ENCODE measurements at regions of chr10 and their contacts with region 1.

Region 1: DNA sequence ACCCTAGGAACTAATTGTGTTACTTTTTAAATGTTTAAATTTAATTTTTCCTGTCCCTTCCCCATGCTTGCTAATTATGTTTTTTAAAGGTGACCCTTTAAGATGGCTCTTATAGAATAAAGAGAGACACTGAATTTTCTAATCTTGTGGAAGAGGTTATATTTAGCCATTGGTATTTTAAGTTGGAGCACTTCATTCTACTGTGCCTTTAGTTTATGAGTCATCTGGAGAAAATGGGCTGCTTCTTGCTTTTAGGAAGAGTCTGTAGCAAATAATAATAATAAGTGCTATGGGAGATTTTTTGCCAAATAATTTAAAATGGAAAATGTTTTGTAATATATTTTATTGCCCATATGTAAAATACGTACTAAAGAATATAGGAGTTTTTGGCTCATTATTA is 139.7 kb downstream of the ADK start:
- DNase-seq: no peak
- ATAC-seq: no peak
- H3K4me3 Mint-ChIP-seq: no peak overlapping the region
- H3K27ac Mint-ChIP-seq: no peak overlapping the region
- H3K4me1 Mint-ChIP-seq: peaks cover 17% of the 10 kb centered on the region
- H3K27me3 Mint-ChIP-seq: no peaks in the 10 kb centered on the region

Region 2: GRCh38 chr10:73791871-73792400 is 498.8 kb before region 1 on chr10:
- CTCF ChIA-PET with region 1: no interaction called
- POLR2A ChIA-PET with region 1: no interaction called
- intact Hi-C with region 1: no loop called
- DNase-seq: no peak
- ATAC-seq: no peak
- H3K4me3 Mint-ChIP-seq: no peak overlapping the region
- H3K27ac Mint-ChIP-seq: no peak overlapping the region
- H3K4me1 Mint-ChIP-seq: peaks cover 8% of the 10 kb centered on the region
- H3K27me3 Mint-ChIP-seq: no peaks in the 10 kb centered on the region

Region 3: DNA sequence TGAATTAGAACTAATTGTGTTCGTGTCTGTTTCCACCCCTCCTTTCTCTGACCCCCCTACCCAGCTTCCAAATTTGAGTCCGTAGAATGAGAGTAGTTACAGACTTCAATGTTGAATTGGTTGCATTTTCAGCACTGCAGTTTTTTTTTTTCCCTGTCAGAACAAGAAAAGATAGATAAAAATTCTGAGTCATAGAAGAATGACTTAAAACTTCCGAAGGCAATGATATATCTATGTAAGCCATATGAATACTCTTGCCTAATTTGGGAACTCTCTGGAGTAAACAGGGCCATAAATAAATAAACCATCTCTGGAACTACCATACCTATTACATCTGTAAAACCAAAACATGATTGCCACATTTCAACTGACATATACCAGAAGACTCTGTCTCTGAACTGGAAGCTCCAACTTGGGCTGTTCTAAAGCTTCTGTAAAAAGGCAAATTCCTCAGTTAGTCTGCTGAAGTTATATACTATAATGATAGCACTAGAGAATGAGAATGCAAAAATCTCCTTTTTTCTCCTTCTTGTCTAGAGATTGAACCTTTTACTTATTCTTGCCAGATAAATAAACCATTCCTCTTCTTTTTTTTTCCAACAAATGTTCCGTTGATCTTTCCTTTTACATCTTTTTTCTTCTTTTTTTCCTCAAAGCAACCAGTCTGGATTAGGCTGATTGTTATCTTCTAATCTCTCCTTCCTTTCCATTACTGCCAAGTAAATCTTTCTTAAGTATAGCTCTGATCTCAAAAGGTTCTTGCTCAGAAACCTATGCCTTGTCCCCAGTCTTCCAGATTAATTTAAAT is 269.3 kb before region 1 on chr10:
- CTCF ChIA-PET with region 1: no interaction called
- POLR2A ChIA-PET with region 1: no interaction called
- intact Hi-C with region 1: no loop called
- DNase-seq: no peak
- ATAC-seq: peak; percentile 70
- H3K4me3 Mint-ChIP-seq: no peak overlapping the region
- H3K27ac Mint-ChIP-seq: peak overlapping the region; percentile 82
- H3K4me1 Mint-ChIP-seq: peaks cover 34% of the 10 kb centered on the region
- H3K27me3 Mint-ChIP-seq: no peaks in the 10 kb centered on the region

Region 4: DNA sequence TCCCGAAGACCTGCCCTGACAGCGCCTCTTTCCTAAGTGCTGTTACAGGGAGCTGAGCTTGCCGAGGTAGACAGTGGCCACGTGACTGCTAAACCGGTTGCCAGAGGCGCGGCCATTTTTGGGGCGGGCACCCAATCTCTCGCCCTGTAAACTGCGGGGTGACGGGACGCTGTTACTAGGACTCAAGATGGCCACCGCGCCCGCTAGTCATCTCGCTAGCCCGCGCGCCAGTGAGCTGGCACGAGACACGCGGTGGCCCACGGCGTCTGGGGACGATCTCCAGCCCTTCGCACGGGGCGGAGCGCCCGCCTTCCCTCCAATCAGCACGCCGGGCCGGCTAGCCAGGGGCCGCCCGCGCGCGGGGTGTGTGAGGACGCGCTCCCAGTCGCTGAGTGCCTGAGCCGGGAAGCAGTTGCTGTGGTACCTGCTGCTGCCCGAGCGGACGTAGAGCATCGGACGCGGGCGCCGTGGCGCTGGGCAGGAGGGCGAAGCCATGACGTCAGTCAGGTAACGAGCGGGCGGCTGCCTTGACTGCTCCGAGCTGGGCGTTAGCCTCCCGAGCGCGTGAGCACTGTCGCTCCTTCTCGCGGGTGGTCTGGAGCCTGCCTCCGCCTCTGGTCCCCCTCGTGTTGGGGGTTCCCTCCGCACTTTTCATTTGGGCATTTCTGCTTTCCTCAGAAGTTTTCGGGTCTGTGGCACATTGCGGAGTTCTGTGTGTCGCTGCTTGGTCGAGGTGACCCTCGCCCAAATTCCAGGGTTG is 114.1 kb before region 1 on chr10:
- CTCF ChIA-PET with region 1: no interaction called
- POLR2A ChIA-PET with region 1: no interaction called
- intact Hi-C with region 1: no loop called
- DNase-seq: peak; percentile 98
- ATAC-seq: peak; percentile 94
- H3K4me3 Mint-ChIP-seq: peak overlapping the region; percentile 89
- H3K27ac Mint-ChIP-seq: peak overlapping the region; percentile 95
- H3K4me1 Mint-ChIP-seq: peaks cover 37% of the 10 kb centered on the region
- H3K27me3 Mint-ChIP-seq: no peaks in the 10 kb centered on the region

Region 5: DNA sequence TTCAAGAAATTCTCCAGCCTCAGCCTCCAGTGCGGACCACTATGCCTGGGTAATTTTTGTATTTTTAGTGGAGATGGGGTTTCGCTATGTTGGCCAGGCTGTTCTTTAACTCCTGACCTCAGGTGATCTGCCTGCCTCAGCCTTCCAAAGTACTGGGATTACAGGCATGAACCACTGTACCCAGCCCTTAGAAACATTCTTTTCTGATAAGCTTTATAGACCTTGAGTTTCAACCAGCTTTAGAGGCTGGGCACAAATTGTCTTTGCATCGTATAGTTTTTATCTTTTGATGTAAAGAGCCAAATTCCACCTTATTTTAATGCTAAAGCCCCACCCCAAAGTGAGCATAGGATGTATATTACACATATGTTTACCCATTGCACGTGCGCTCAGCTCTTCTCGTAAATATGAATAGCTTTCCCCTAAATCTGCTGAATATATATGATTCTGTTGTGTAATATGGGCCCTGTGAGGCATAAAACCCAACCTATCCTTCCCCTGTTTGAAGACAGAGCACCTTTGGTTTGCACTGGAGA is 14.9 kb before region 1 on chr10:
- CTCF ChIA-PET with region 1: interaction called, 11 read pairs
- POLR2A ChIA-PET with region 1: no interaction called
- intact Hi-C with region 1: no loop called
- DNase-seq: no peak
- ATAC-seq: no peak
- H3K4me3 Mint-ChIP-seq: no peak overlapping the region
- H3K27ac Mint-ChIP-seq: no peak overlapping the region
- H3K4me1 Mint-ChIP-seq: no peaks in the 10 kb centered on the region
- H3K27me3 Mint-ChIP-seq: no peaks in the 10 kb centered on the region

Measured in activated CD4-positive, alpha-beta T cell treated with anti-CD3 and anti-CD28 coated beads for 36 hours (primary cell).